Calu3 (cell line): ENCODE measurements at regions of chr12 and their contacts with region 1.

Region 1: DNA sequence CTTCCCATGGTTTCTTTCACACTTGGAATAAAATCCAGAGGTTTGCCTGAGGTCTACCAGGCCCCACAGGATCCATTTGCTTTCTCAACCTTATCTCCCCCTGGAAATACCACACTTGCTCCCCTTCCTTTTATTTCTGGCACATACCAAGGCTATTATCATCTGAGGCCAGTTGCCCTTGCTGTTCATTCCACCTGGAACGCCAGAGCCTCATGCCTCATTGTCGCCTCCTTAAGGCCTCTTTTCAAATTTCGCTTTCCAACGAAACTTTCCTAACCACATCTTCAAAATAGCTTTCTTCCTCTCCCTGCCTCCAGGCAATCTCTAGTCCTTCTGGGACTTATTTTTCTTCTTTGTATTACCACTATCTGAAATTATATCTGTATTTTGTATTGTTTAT is 11.2 kb upstream of the LRIG3 start:
- DNase-seq: peak; percentile 66
- H3K4me3 Mint-ChIP-seq: peak overlapping the region; percentile 26
- H3K27ac Mint-ChIP-seq: peak overlapping the region; percentile 71
- H3K4me1 Mint-ChIP-seq: peaks cover 55% of the 10 kb centered on the region
- H3K27me3 Mint-ChIP-seq: no peaks in the 10 kb centered on the region
- CTCF ChIP-seq: peak; percentile 75

Region 2: GRCh38 chr12:59077575-59078426 is 146.3 kb after region 1 on chr12:
- CTCF ChIA-PET with region 1: interaction called, 3 read pairs
- intact Hi-C with region 1: loop called (anchors 5 kb)
- DNase-seq: no peak
- H3K4me3 Mint-ChIP-seq: peak overlapping the region; percentile 58
- H3K27ac Mint-ChIP-seq: peak overlapping the region; percentile 91
- H3K4me1 Mint-ChIP-seq: peaks cover 85% of the 10 kb centered on the region
- H3K27me3 Mint-ChIP-seq: no peaks in the 10 kb centered on the region
- CTCF ChIP-seq: no peak